PC-3 (cell line): ENCODE measurements at regions of chr17 and their contacts with region 1.

Region 1: DNA sequence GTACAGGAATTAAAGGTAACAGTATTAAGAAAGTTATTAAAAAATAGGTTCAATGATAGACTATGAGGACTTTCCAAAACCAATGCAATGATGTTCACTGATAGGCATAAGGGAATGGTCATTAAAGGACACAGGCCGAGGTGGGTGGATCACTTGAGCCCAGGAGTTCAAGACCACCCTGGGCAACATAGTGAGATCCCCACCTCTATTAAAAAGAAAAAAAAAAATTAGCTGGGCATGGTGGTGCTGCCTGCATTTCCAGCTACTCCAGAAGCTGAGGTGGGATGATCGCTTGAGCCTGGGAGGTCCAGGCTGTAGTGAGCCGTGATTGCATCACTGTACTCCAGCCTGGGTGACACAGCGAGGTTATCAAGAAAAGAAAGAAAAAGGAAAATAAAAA is 5.9 kb downstream of the TOP2A start:
- DNase-seq: no peak
- ATAC-seq: no peak
- H3K4me3 ChIP-seq: no peak overlapping the region
- H3K27ac ChIP-seq: no peak overlapping the region
- H3K4me1 ChIP-seq: peaks cover 8% of the 10 kb centered on the region
- H3K27me3 ChIP-seq: no peaks in the 10 kb centered on the region
- CTCF ChIP-seq: no peak

Region 2: GRCh38 chr17:40151414-40151963 is 260.3 kb before region 1 on chr17:
- CTCF ChIA-PET with region 1: no interaction called
- POLR2A ChIA-PET with region 1: interaction called, 20 read pairs
- intact Hi-C with region 1: no loop called
- DNase-seq: no peak
- ATAC-seq: no peak
- H3K4me3 ChIP-seq: no peak overlapping the region
- H3K27ac ChIP-seq: no peak overlapping the region
- H3K4me1 ChIP-seq: no peaks in the 10 kb centered on the region
- H3K27me3 ChIP-seq: no peaks in the 10 kb centered on the region
- CTCF ChIP-seq: no peak

Region 3: DNA sequence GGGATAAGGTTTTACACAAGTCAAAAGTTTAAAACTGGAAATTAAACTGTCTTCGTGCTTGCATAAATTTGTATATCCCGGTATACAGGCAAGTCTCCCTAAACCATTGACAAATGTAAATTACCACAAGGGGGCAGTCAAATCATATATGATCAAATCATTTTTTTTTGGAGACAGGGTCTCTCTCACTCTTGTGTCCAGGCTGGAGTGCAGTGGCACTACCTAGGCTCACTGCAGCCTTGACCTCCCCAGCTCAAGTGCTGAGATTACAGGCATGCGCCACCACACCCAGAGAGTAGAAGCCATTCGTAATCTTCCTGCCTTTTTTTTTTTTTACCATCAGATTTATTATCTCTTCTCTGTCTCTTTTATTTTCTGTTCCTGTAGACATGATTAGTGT is 12.6 kb before region 1 on chr17:
- CTCF ChIA-PET with region 1: interaction called, 14 read pairs
- POLR2A ChIA-PET with region 1: no interaction called
- intact Hi-C with region 1: no loop called
- DNase-seq: peak; percentile 69
- ATAC-seq: peak; percentile 49; the same call in 1 of the 2 replicates
- H3K4me3 ChIP-seq: no peak overlapping the region
- H3K27ac ChIP-seq: no peak overlapping the region
- H3K4me1 ChIP-seq: no peaks in the 10 kb centered on the region
- H3K27me3 ChIP-seq: no peaks in the 10 kb centered on the region
- CTCF ChIP-seq: peak; percentile 65

Region 4: DNA sequence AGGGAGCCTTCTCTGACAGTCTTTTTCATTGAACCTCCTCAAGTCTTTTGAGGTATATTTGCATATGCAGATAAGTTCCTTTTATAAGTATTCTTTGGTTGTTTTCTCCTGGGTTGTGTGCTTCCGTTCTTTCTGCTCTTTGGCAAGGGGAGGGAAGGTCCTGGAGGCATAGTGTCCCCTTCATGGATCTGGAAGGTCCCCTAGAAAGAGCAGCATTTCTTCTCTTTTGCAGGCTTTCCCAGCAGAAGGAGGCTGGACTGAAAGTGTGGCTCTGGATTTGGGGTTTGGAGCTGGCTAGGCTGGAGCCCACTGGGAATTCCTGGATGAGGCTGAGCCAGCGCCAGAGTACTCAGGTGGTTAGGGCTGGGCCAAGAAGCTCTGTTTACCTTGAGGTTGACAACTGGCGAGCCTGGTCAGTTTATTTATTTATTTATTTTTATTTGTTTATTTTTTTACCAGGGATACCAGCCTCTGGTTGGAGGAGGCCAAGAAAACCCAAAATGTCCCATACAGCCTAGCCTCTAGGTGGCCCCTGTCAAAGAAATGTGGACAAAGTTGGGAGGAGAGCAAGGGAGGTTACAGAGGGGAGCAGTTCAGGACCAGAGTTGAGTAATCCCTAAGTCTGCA is 11.3 kb after region 1 on chr17:
- CTCF ChIA-PET with region 1: no interaction called
- POLR2A ChIA-PET with region 1: no interaction called
- intact Hi-C with region 1: no loop called
- DNase-seq: peak; percentile 51
- ATAC-seq: peak; percentile 56
- H3K4me3 ChIP-seq: no peak overlapping the region
- H3K27ac ChIP-seq: no peak overlapping the region
- H3K4me1 ChIP-seq: peaks cover 9% of the 10 kb centered on the region
- H3K27me3 ChIP-seq: no peaks in the 10 kb centered on the region
- CTCF ChIP-seq: peak; percentile 41; the same call in 1 of the 2 replicates

Region 5: DNA sequence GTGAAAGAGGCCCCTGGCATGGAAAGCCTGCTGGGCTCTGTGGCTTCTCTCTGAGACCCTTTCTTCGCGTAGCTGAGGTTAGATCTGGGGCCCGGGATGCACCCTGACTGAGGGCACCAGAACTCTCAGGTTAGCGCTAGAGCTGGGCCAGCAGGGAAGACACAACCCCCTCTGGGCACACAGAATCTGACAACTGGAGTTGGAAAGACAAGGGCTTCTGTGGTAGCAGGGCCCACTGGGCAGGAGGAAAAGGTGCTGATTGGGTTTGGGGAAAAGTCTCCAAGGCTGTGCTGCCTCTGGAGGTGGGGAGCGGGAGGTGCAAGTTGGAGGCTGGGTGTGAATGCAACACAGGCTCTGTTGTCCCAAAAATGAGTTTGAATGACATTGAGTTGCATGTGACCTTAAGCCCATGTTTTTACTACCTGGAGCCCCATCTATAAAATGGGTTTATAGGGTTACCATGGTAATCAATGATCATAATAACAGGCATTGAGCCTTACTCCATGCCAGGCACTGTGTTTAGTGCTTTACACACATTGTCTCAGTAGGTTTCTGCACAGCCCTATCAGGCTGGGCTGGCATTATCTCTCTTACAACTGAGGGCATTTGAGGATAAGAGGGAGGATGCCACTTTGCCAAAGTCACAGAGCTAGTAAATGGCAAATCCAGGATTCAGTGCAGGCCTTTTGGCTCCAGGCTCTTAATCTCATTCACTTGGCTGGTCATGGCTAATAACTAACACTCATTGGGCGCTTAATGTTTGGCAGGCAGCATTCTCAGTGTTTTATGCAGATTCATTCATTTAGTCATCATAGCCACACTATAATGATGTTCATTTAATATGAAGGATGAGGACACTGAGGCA is 22.0 kb after region 1 on chr17:
- CTCF ChIA-PET with region 1: no interaction called
- POLR2A ChIA-PET with region 1: no interaction called
- intact Hi-C with region 1: no loop called
- DNase-seq: no peak
- ATAC-seq: peak; percentile 54
- H3K4me3 ChIP-seq: no peak overlapping the region
- H3K27ac ChIP-seq: no peak overlapping the region
- H3K4me1 ChIP-seq: no peaks in the 10 kb centered on the region
- H3K27me3 ChIP-seq: no peaks in the 10 kb centered on the region
- CTCF ChIP-seq: peak; percentile 56; the same call in 1 of the 2 replicates